ENCODE measurements at regions of chr5 and their contacts with region 1.

Region 1: DNA sequence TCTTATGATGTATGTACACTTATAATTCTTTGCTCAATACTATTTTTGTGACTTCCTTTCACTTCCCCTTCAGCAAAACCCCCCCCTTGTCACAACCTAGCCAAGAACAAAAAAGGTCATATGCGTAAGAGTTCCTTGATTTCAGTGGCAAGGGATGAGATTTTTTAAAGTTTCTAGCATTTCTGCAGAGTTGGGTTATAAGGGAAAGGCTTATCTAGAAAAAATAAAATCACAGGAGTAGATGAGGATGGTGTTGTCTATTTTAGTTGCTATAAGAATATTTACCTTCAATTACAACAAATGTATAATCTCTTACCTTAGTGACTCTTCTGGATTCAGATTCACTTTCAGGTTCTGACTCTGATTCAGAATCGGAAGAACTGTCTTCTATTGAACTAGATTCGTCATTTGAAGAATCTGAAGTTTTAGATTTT is 184.6 kb downstream of the AP3B1 start:
- DNase-seq: no peak
- ATAC-seq: peak; percentile 76
- H3K4me3 Mint-ChIP-seq: peak overlapping the region; percentile 75
- H3K27ac Mint-ChIP-seq: peak overlapping the region; percentile 87
- H3K4me1 Mint-ChIP-seq: peaks cover 69% of the 10 kb centered on the region
- H3K27me3 Mint-ChIP-seq: no peaks in the 10 kb centered on the region
- CTCF ChIP-seq: no peak

Region 2: GRCh38 chr5:77852514-77853352 is 257.2 kb before region 1 on chr5:
- CTCF ChIA-PET with region 1: no interaction called
- POLR2A ChIA-PET with region 1: no interaction called
- intact Hi-C with region 1: loop called (anchors 5 kb)
- DNase-seq: peak; percentile 68
- ATAC-seq: peak; percentile 89
- H3K4me3 Mint-ChIP-seq: peak overlapping the region; percentile 81
- H3K27ac Mint-ChIP-seq: peak overlapping the region; percentile 92
- H3K4me1 Mint-ChIP-seq: peaks cover 17% of the 10 kb centered on the region
- H3K27me3 Mint-ChIP-seq: no peaks in the 10 kb centered on the region
- CTCF ChIP-seq: no peak

Region 3: DNA sequence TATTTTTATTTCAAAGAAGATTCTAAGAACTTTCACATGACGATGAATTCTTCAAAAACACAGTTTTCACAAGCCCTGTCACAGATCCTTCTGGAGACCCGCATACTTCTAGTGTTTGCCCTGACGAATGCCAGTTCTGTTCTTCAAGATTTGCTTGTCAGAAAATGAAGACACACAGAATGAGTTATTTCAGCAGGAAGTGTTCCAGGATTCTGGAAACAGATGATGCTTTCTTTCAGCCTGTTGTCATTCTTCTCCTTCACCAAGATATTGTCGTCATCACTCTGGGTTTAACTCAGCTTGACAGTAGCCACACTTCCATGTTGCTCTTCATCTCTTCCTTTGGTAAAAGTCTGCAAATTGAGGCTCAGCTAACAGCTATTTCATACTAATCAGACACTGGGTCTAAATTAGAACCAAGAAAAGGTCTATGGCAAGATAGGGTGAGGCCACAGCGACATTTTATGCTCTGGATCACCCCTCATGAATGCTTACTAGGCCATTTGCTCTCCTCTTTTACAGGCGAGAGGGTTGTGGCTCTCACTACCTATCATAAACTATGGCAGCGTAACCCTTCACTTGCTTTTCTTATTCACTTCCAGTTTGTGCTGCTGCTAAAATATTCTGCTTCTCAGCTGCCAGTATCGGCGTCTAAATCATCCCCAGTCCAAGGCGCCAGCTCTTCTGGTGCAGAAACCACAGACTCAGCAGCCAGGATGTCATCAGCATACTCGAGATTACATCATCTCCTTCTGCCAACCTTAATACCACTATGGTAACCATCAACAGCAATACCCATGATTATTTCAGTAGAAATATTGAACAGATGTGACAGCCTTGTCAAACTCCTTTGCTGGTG is 174.2 kb before region 1 on chr5:
- CTCF ChIA-PET with region 1: no interaction called
- POLR2A ChIA-PET with region 1: interaction called, 3 read pairs
- intact Hi-C with region 1: loop called (anchors 5 kb)
- DNase-seq: no peak
- ATAC-seq: peak; percentile 83
- H3K4me3 Mint-ChIP-seq: peak overlapping the region; percentile 1
- H3K27ac Mint-ChIP-seq: peak overlapping the region; percentile 65
- H3K4me1 Mint-ChIP-seq: peaks cover 28% of the 10 kb centered on the region
- H3K27me3 Mint-ChIP-seq: peaks cover 4% of the 10 kb centered on the region
- CTCF ChIP-seq: no peak

Region 4: GRCh38 chr5:78095125-78095524 is 14.8 kb before region 1 on chr5:
- CTCF ChIA-PET with region 1: no interaction called
- POLR2A ChIA-PET with region 1: no interaction called
- intact Hi-C with region 1: no loop called
- DNase-seq: no peak
- ATAC-seq: no peak
- H3K4me3 Mint-ChIP-seq: no peak overlapping the region
- H3K27ac Mint-ChIP-seq: no peak overlapping the region
- H3K4me1 Mint-ChIP-seq: peaks cover 4% of the 10 kb centered on the region
- H3K27me3 Mint-ChIP-seq: no peaks in the 10 kb centered on the region
- CTCF ChIP-seq: no peak

Region 5: DNA sequence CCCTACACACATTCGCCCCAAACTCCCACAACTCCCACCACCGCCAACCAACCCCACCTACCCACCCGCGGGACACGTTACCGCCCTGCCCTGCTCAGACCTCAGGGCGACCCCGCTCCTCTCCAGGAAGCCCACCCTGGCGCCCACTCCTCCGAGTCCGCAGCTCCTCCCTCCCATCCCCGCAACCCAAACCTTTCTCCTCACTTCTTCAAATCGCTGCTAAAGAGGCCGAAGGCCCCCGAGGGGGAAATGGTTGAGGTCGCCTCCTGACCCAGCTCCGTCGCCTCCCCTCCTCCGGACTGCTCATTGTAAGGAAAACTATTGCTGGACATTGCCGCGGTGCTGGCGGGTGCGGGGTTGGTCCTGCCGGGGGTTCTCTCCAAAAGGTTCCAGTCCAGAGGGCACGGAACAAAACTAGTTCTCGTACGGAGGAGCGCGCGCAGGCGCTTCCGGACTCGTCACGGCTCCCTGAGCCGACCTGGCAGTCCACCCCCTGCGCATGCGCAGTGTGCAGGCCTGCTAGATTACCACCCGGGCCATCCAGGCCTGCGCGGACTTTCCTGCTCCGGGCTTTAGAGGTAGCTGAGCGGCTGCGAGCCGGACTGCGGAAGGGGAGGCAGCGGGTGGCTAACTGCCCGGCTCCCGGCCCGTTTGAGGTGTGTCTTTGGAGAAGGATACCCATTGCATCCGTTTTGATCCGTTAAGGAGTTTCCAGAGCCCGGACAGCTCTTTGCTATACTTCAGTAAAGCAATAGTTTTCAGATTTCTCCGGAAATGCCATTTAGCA is 184.5 kb after region 1 on chr5 and contains the start of gene AP3B1:
- CTCF ChIA-PET with region 1: no interaction called
- POLR2A ChIA-PET with region 1: no interaction called
- intact Hi-C with region 1: loop called (anchors 2 kb)
- DNase-seq: peak; percentile 96
- ATAC-seq: peak; percentile 94
- H3K4me3 Mint-ChIP-seq: peak within 1 kb of the TSS; percentile 98
- H3K27ac Mint-ChIP-seq: peak within 1 kb of the TSS; percentile 98
- H3K4me1 Mint-ChIP-seq: peaks cover 44% of the 10 kb centered on the region
- H3K27me3 Mint-ChIP-seq: no peaks in the 10 kb centered on the region
- CTCF ChIP-seq: no peak
- total RNA-seq, gene AP3B1: 46.8 and 52.9 TPM in 2 replicates